Dendritic cell treated with granulocyte-macrophage colony-stimulating factor and Interleukin-4, amounts not matched to agents 40 ng/mL and 50 ng/mL, for 4 days (primary cell): ENCODE measurements at regions of chr17 and their contacts with region 1.

Region 1: DNA sequence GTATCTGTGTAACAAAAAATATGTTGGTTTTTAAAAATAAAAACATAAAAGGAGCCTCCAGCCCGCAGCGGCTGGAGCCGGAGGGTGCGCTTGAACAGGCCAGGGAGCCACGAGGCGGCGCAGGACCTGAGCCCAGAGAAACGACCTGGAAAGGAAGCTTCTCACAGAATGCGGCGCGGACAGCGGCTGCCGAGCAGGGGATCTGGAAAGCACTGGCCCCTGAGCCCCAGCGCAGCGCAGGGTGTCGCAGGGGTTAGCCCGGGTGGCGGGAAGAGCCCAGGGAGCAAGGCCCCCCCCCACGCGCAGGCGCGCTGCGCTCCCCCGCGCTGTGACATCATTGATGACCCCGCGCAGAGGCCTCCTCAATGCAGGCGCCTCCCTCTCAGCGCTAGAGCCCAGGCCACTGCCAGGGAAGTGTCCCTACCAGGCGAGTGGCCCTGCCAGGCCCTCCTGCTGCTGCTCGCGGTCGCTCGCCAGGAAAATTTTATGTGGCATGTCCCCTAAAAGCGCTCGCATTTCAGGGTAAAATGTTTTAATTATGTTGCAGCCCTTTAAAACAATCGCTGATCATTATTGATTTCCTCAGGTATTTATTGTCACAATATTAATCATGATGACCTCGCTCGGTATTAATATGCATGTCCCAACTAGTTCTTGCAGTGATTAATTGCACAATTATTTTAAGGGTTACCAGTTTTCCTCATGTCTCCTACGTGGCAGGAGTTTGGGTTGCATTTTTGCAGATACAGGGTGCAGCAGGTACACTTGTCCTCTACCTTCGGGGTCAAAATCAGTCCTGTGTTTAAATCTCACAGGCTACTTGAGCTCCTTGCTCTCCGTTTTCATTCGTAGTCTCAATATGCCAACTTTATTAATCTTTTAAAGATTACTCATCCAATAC is 134.2 kb downstream of the USP22 start:
- H3K4me3 Mint-ChIP-seq: peak overlapping the region; percentile 87
- H3K27ac Mint-ChIP-seq: peak overlapping the region; percentile 92
- H3K4me1 Mint-ChIP-seq: peaks cover 6% of the 10 kb centered on the region
- H3K27me3 Mint-ChIP-seq: peaks cover 13% of the 10 kb centered on the region

Region 2: GRCh38 chr17:20992987-20993862 is 84.6 kb after region 1 on chr17:
- intact Hi-C with region 1: loop called (anchors 5 kb)
- H3K4me3 Mint-ChIP-seq: no peak overlapping the region
- H3K27ac Mint-ChIP-seq: no peak overlapping the region
- H3K4me1 Mint-ChIP-seq: no peaks in the 10 kb centered on the region
- H3K27me3 Mint-ChIP-seq: peaks cover 11% of the 10 kb centered on the region

Region 3: GRCh38 chr17:21007646-21008045 is 99.0 kb after region 1 on chr17:
- intact Hi-C with region 1: no loop called
- H3K4me3 Mint-ChIP-seq: no peak overlapping the region
- H3K27ac Mint-ChIP-seq: no peak overlapping the region
- H3K4me1 Mint-ChIP-seq: no peaks in the 10 kb centered on the region
- H3K27me3 Mint-ChIP-seq: no peaks in the 10 kb centered on the region